Activated naive CD4-positive, alpha-beta T cell treated with anti-CD3 and anti-CD28 coated beads for 36 hours (primary cell): ENCODE measurements at regions of chr1 and their contacts with region 1.

Region 1: DNA sequence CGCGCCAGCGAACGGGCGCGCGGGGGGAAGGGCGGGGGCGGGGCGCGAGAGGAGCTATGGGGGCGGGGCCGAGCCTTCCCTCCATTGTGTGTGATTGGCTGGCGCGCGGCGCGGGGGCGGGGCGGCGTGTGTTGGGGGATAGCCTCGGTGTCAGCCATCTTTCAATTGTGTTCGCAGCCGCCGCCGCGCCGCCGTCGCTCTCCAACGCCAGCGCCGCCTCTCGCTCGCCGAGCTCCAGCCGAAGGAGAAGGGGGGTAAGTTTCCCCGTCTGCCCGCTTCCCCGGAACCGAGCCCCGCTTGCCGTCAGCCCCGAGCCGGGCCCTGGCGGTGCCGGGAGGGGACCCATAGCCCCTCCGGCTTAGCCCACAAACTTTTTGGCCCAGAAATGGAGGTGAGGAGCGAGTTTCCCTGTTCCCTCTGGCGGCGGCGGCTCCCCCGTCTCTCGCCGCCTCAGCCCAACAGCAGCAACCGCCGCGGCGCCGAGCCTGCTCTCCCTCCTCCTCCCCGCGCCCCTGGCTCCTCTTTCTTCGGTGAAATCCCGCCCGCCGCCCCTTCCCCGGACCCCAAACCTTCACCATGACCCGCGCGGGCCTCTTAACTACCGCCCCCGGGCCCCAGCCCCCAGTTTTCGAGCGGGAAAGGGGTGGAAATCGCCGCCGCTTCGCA is at the start of gene H3-3A:
- DNase-seq: peak; percentile 98
- H3K4me3 Mint-ChIP-seq: peak within 1 kb of the TSS; percentile 100
- H3K27ac Mint-ChIP-seq: peak within 1 kb of the TSS; percentile 98
- H3K4me1 Mint-ChIP-seq: peaks cover 36% of the 10 kb centered on the region
- H3K27me3 Mint-ChIP-seq: no peaks in the 10 kb centered on the region
- total RNA-seq, gene H3-3A: 325 to 332 TPM

Region 2: GRCh38 chr1:225467193-225468020 is 595.3 kb before region 1 on chr1:
- CTCF ChIA-PET with region 1: no interaction called
- intact Hi-C with region 1: loop called (anchors 2 kb)
- DNase-seq: peak; percentile 91
- H3K4me3 Mint-ChIP-seq: peak overlapping the region; percentile 90
- H3K27ac Mint-ChIP-seq: peak overlapping the region; percentile 99
- H3K4me1 Mint-ChIP-seq: peaks cover 17% of the 10 kb centered on the region
- H3K27me3 Mint-ChIP-seq: no peaks in the 10 kb centered on the region

Region 3: DNA sequence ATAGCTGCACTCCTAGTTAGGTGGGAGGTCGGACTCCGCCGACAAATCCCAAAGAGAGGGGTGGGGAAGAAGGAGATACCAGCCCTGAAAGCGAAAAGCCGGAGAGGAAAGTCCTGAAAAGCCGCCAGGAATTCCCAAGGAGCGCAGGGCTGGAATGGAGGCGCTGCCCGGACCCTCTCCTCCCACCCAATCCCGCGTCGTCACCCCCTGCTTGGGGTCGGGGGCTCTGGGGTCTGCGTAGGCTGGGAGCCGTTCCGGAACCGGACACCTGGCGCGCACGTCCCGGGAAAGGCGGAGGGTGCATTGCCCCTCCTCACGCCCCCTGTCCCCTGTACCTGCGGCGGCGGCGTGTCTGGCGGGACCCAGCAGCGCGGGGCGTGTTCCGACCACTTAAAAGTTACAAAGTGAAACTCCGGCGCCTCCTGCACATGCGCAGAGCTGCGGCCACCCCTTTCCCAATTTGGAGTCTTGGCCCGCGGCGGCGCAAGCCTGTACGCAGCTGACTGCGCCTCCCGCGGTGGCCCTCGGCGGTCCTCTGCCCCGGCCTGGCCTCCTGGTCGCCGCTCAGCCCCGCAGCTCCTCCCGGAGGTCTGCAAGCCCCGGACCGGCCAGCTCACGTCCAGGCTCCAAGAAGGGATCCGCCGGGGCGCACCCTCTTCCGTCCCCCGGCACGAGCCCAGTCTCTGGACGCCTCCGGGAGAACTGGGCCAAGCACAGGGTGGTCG is 180.6 kb before region 1 on chr1 and contains the start of gene TMEM63A:
- CTCF ChIA-PET with region 1: no interaction called
- intact Hi-C with region 1: loop called (anchors 2 kb)
- DNase-seq: peak; percentile 88
- H3K4me3 Mint-ChIP-seq: peak within 1 kb of the TSS; percentile 92
- H3K27ac Mint-ChIP-seq: peak within 1 kb of the TSS; percentile 91
- H3K4me1 Mint-ChIP-seq: peaks cover 49% of the 10 kb centered on the region
- H3K27me3 Mint-ChIP-seq: no peaks in the 10 kb centered on the region
- total RNA-seq, gene TMEM63A: 34.3 to 34.7 TPM

Region 4: DNA sequence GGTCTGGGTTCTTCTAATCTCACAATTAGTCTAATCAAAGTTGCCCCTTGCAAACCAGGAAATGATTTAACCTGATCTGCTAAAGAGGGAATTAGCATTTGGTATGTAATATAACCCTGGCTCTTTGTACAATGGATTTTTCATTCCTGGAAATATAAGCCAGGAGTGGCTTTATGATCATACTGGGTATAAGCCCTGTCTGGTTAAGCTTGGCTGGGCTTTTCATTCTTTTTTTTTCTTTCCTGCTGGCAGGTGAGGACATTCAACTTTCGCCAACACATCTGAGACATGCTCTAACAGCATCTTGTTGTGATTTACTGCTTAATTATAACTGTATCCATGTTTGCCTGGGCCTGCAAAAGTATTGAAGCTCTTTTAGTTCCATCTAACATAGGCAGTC is 43.1 kb before region 1 on chr1:
- CTCF ChIA-PET with region 1: no interaction called
- intact Hi-C with region 1: no loop called
- DNase-seq: no peak
- H3K4me3 Mint-ChIP-seq: no peak overlapping the region
- H3K27ac Mint-ChIP-seq: no peak overlapping the region
- H3K4me1 Mint-ChIP-seq: no peaks in the 10 kb centered on the region
- H3K27me3 Mint-ChIP-seq: no peaks in the 10 kb centered on the region

Region 5: DNA sequence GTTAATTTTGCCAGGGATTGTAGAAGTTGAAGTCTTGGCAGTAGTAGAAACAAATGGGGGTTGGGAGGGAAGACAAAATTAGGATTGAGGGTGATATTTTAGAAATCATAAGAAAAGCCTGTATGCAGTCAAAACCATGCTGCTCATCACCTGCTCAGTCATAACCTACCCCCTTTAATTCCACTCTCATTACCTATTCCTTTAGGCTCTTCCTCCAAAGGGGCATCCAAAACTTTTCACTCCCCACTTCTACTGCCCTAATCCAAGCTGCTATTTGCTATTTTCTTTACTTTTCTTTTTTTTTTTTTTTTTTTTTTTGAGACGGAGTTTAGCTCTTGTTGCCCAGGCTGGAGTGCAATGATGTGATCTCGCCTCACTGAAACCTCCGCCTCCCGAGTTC is 11.4 kb after region 1 on chr1:
- CTCF ChIA-PET with region 1: interaction called, 13 read pairs
- intact Hi-C with region 1: no loop called
- DNase-seq: no peak
- H3K4me3 Mint-ChIP-seq: no peak overlapping the region
- H3K27ac Mint-ChIP-seq: peak overlapping the region; percentile 0
- H3K4me1 Mint-ChIP-seq: peaks cover 22% of the 10 kb centered on the region
- H3K27me3 Mint-ChIP-seq: no peaks in the 10 kb centered on the region

Region 6: DNA sequence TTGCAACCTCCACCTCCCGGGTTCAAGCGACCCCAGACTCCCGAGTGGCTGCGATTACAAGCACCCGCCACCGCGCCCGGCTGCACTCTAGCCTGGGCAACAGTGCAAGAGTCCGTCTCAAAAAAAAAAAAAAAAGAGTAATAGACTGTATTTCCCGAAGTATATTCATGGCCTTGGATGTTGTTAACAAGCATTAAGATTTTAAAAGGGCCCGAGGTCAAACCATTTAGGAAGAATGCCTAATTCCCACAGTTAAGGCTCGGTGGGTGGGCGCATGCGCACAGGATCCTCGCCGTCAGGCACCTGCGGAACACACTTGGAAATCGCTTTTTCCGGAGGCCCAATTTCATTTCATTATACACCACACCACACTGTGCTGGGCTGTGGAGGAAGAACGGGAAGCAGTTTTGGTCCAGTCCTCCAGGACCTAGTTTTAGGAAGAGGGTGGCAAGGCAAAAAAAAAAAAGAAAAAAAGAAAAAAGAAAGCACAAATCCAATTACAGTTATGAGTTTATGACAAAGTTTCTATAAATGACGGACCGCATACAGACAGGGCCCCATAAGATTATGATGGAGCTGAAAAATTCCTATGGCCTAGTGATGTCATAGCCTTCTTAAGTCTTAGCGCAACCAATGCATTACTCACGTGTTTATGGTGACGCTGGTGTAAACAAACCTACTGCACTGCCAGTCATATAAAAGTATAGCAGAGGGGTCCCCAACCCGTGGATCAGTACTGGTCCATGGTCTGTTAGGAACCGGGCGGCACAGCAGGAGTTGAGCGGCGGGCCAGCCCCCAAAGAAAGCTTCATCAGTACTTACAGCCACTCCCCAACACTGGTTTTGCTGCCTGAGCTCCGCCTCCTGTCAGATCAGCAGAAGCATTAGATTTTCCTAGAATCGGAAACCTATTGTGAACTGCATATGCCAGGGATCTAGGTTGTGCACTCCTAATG is 38.0 kb after region 1 on chr1:
- CTCF ChIA-PET with region 1: interaction called, 13 read pairs
- intact Hi-C with region 1: no loop called
- DNase-seq: peak; percentile 43
- H3K4me3 Mint-ChIP-seq: peak overlapping the region; percentile 79
- H3K27ac Mint-ChIP-seq: no peak overlapping the region
- H3K4me1 Mint-ChIP-seq: peaks cover 13% of the 10 kb centered on the region
- H3K27me3 Mint-ChIP-seq: peaks cover 2% of the 10 kb centered on the region

Region 7: GRCh38 chr1:226186124-226187018 is 123.7 kb after region 1 on chr1 and contains the start of gene ACBD3:
- CTCF ChIA-PET with region 1: interaction called, 3 read pairs
- intact Hi-C with region 1: loop called (anchors 5 kb)
- DNase-seq: peak; percentile 91
- H3K4me3 Mint-ChIP-seq: peak within 1 kb of the TSS; percentile 89
- H3K27ac Mint-ChIP-seq: peak within 1 kb of the TSS; percentile 87
- H3K4me1 Mint-ChIP-seq: peaks cover 34% of the 10 kb centered on the region
- H3K27me3 Mint-ChIP-seq: no peaks in the 10 kb centered on the region
- total RNA-seq, gene ACBD3: 15.0 to 15.7 TPM

Region 8: DNA sequence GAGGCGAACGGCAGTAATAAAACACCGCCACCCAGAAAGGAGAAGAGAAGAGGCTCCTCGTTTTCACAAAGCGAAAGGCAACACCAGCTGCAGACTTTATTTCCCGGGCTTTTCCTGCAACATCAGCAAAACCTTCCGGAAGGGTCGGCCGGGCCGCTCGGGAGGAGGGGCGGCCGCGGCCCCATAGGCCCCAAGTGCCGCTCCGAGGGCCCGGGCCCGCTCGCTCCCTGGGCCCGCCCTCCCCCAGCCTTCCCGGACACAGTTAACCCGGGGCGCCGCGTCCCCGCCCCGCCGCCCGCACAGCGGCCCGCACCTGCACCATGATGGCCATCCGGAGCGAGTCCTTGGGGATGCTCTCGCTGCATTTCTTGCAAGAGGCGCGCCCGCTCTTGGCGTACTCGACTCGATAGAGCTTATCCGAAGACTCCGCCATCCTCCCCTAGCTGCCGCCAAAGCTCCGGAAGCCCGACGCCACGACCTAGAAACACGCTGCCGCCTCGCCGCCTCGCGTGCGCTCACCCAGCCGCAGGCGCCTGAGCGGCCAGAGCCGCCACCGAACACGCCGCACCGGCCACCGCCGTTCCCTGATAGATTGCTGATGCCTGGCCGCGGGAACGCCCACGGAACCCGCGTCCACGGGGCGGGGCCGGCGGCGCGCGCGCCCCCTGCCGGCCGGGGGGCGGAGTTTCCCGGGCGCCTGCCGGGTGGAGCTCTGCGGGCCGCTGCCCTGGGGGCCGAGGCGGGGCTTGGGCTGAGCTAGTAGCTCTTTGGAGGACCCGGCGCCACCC is 345.0 kb after region 1 on chr1 and contains the start of gene PARP1:
- CTCF ChIA-PET with region 1: no interaction called
- intact Hi-C with region 1: loop called (anchors 1 kb)
- DNase-seq: peak; percentile 87
- H3K4me3 Mint-ChIP-seq: peak within 1 kb of the TSS; percentile 99
- H3K27ac Mint-ChIP-seq: peak within 1 kb of the TSS; percentile 98
- H3K4me1 Mint-ChIP-seq: peaks cover 39% of the 10 kb centered on the region
- H3K27me3 Mint-ChIP-seq: no peaks in the 10 kb centered on the region
- total RNA-seq, gene PARP1: 265 to 273 TPM